Caco-2 (cell line): ENCODE measurements at regions of chr4 and their contacts with region 1.

Region 1: DNA sequence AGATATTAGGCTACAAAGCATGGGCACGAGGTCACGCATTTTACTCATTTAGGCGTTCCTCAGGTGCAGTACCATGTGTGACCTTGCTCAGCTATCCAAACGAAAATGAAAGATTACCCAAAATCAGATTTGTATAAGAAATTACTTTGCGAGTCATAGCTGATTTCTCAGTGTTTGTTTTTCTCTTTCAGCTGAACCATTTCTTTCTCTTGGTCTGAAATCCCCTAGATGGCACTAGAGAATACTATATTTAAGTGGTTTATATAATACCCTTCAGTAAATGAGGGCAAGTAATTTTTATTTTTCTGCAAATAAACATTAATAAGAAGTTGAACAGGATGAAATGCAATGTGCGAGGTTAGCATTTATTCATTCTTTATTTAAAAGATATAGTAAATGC is 496.6 kb downstream of the STIM2 start:
- DNase-seq: no peak
- H3K4me3 ChIP-seq: no peak overlapping the region
- H3K4me3 Mint-ChIP-seq: no peak overlapping the region
- H3K27ac Mint-ChIP-seq: no peak overlapping the region
- H3K4me1 ChIP-seq: no peaks in the 10 kb centered on the region
- H3K4me1 Mint-ChIP-seq: peaks cover 11% of the 10 kb centered on the region
- H3K27me3 ChIP-seq: no peaks in the 10 kb centered on the region
- H3K27me3 Mint-ChIP-seq: no peaks in the 10 kb centered on the region
- CTCF ChIP-seq: peak in 1 of 2 experiments; percentile 35

Region 2: GRCh38 chr4:27442146-27442545 is 84.9 kb after region 1 on chr4:
- CTCF ChIA-PET with region 1: no interaction called
- POLR2A ChIA-PET with region 1: no interaction called
- intact Hi-C with region 1: loop called (anchors 10 kb)
- DNase-seq: no peak
- H3K4me3 ChIP-seq: no peak overlapping the region
- H3K4me3 Mint-ChIP-seq: no peak overlapping the region
- H3K27ac Mint-ChIP-seq: peak overlapping the region; percentile 72
- H3K4me1 ChIP-seq: no peaks in the 10 kb centered on the region
- H3K4me1 Mint-ChIP-seq: no peaks in the 10 kb centered on the region
- H3K27me3 ChIP-seq: no peaks in the 10 kb centered on the region
- H3K27me3 Mint-ChIP-seq: no peaks in the 10 kb centered on the region
- CTCF ChIP-seq: no peak

Region 3: DNA sequence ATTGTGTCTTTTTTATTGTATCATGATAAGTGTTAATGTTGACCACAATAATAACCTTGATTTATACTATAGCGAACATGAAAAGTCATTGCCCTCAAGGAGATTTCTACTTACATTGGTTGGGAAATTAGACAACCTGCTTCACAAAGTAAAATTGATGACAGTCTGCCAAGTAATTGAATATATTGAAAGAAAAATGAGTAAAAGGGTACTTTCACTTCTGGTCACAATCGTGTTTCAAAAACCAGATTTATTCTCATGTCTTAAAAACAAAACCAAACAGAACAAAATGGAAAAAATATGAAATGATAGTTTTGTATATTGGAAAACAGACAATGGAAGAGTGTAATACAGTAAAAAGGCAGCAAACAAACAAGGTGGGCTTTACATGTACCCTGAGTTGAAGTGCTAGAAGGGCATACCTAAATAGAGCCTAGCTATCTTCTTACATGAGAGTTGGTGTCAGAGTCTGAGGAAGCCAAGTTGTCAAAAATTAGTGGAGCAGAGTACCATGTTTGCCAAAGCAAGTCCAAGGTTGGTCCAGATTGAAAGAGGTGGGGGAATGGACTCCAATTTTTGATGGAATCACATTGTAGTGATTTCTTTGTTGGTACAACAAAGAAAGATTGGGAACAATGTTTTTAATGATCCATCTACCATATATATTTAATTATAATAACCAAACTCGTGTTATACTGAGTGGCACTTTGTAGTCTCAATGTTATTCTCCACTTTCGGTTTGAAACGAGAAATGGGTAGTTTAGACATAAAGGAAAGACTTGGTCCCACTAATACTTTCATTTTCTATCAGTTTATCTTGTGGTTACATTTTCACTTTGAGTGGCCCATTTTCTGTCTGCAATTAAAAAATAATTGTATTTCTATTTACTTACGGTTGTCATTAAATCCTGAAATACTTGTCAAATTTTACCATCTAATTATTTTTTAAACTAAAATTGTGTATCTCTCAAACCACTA is 278.9 kb after region 1 on chr4:
- CTCF ChIA-PET with region 1: no interaction called
- POLR2A ChIA-PET with region 1: no interaction called
- intact Hi-C with region 1: loop called (anchors 1 kb)
- DNase-seq: no peak
- H3K4me3 ChIP-seq: no peak overlapping the region
- H3K4me3 Mint-ChIP-seq: no peak overlapping the region
- H3K27ac Mint-ChIP-seq: no peak overlapping the region
- H3K4me1 ChIP-seq: no peaks in the 10 kb centered on the region
- H3K4me1 Mint-ChIP-seq: no peaks in the 10 kb centered on the region
- H3K27me3 ChIP-seq: no peaks in the 10 kb centered on the region
- H3K27me3 Mint-ChIP-seq: no peaks in the 10 kb centered on the region
- CTCF ChIP-seq: no peak